Activated CD8-positive, alpha-beta T cell treated with anti-CD3 and anti-CD28 coated beads, Interleukin-2, amount 10 ng/mL, durations not matched to agents 7 days and 5 days (primary cell): ENCODE measurements at regions of chr4 and their contacts with region 1.

Region 1: GRCh38 chr4:142365387-142365786 is 480.7 kb downstream of the INPP4B start:
- DNase-seq: no peak
- ATAC-seq: no peak
- H3K4me3 Mint-ChIP-seq: no peak overlapping the region
- H3K27ac Mint-ChIP-seq: no peak overlapping the region
- H3K4me1 Mint-ChIP-seq: peaks cover 29% of the 10 kb centered on the region
- H3K27me3 Mint-ChIP-seq: no peaks in the 10 kb centered on the region

Region 2: DNA sequence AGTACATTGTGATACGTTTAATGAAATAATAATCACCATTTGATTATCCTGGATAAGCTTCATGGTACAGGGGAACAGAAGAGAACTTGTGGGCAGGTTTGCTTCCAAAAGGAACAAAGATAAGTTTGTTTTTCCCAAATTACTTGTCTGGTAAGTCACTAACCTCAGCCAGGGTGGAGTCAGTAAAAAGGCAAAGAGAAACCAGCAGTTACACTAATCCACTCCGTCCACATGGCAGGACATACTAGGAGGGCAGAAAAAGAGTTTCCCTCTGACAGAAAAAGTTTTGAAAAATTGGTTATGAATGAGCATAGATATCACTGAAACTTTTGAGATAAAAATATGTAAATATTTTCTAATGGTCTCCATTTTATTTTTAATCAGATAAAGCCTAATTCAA is 443.2 kb before region 1 on chr4:
- CTCF ChIA-PET with region 1: no interaction called
- POLR2A ChIA-PET with region 1: no interaction called
- DNase-seq: no peak
- ATAC-seq: no peak
- H3K4me3 Mint-ChIP-seq: no peak overlapping the region
- H3K27ac Mint-ChIP-seq: no peak overlapping the region
- H3K4me1 Mint-ChIP-seq: no peaks in the 10 kb centered on the region
- H3K27me3 Mint-ChIP-seq: no peaks in the 10 kb centered on the region

Region 3: GRCh38 chr4:142307857-142308256 is 57.5 kb before region 1 on chr4:
- CTCF ChIA-PET with region 1: no interaction called
- POLR2A ChIA-PET with region 1: interaction called, 10 read pairs
- DNase-seq: no peak
- ATAC-seq: no peak
- H3K4me3 Mint-ChIP-seq: no peak overlapping the region
- H3K27ac Mint-ChIP-seq: no peak overlapping the region
- H3K4me1 Mint-ChIP-seq: peaks cover under 1% of the 10 kb centered on the region
- H3K27me3 Mint-ChIP-seq: no peaks in the 10 kb centered on the region